ENCODE measurements at regions of chr19 and their contacts with region 1.

Region 1: DNA sequence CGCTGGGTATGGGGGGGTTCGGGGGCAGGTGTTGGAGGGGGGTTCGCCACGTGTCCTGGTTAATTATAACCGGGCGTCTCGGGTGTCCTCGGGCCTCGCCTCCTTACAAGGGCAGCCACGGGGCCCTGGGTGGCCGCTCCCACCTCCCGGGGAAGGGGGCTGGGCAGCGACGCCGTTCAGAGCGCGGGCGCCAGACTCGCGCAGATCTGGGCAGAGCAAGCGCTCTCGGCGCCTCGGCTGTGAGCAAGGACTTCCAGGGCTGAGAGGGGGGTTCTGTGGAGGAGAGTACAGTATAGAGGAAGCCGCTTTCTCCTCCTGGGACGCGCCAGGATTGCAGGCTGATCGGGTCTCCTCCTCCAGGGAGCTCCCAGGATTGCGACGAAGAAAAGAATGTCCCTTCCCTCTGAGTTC is 1.0 kb upstream of the CKM start:
- DNase-seq: no peak
- H3K4me3 ChIP-seq: no peak overlapping the region
- H3K27ac ChIP-seq: no peak overlapping the region
- H3K4me1 ChIP-seq: no peaks in the 10 kb centered on the region; the same call in 1 of the 2 replicates
- H3K27me3 ChIP-seq: no peaks in the 10 kb centered on the region
- CTCF ChIP-seq: no peak

Region 2: GRCh38 chr19:45137179-45137761 is 186.4 kb before region 1 on chr19:
- CTCF ChIA-PET with region 1: no interaction called
- POLR2A ChIA-PET with region 1: no interaction called
- intact Hi-C with region 1: no loop called
- DNase-seq: no peak
- H3K4me3 ChIP-seq: no peak overlapping the region
- H3K27ac ChIP-seq: no peak overlapping the region
- H3K4me1 ChIP-seq: no peaks in the 10 kb centered on the region
- H3K27me3 ChIP-seq: no peaks in the 10 kb centered on the region
- CTCF ChIP-seq: no peak

Region 3: GRCh38 chr19:45423589-45424190 is 100.0 kb after region 1 on chr19 and contains the start of gene ERCC1:
- CTCF ChIA-PET with region 1: interaction called, 11 read pairs
- POLR2A ChIA-PET with region 1: no interaction called
- intact Hi-C with region 1: no loop called
- DNase-seq: peak; percentile 97 to 99
- H3K4me3 ChIP-seq: peak within 1 kb of the TSS; percentile 77
- H3K27ac ChIP-seq: peak within 1 kb of the TSS; percentile 99
- H3K4me1 ChIP-seq: peaks cover 39% of the 10 kb centered on the region
- H3K27me3 ChIP-seq: no peaks in the 10 kb centered on the region
- CTCF ChIP-seq: no peak
- total RNA-seq, gene ERCC1: 102 and 138 TPM in 2 replicates

Region 4: GRCh38 chr19:45496349-45496953 is 172.8 kb after region 1 on chr19:
- CTCF ChIA-PET with region 1: no interaction called
- POLR2A ChIA-PET with region 1: no interaction called
- intact Hi-C with region 1: no loop called
- DNase-seq: peak in 1 of 2 experiments; percentile 45
- H3K4me3 ChIP-seq: peak overlapping the region; percentile 92
- H3K27ac ChIP-seq: no peak overlapping the region
- H3K4me1 ChIP-seq: peaks cover 14% of the 10 kb centered on the region; the same call in 1 of the 2 replicates
- H3K27me3 ChIP-seq: no peaks in the 10 kb centered on the region
- CTCF ChIP-seq: no peak

Region 5: DNA sequence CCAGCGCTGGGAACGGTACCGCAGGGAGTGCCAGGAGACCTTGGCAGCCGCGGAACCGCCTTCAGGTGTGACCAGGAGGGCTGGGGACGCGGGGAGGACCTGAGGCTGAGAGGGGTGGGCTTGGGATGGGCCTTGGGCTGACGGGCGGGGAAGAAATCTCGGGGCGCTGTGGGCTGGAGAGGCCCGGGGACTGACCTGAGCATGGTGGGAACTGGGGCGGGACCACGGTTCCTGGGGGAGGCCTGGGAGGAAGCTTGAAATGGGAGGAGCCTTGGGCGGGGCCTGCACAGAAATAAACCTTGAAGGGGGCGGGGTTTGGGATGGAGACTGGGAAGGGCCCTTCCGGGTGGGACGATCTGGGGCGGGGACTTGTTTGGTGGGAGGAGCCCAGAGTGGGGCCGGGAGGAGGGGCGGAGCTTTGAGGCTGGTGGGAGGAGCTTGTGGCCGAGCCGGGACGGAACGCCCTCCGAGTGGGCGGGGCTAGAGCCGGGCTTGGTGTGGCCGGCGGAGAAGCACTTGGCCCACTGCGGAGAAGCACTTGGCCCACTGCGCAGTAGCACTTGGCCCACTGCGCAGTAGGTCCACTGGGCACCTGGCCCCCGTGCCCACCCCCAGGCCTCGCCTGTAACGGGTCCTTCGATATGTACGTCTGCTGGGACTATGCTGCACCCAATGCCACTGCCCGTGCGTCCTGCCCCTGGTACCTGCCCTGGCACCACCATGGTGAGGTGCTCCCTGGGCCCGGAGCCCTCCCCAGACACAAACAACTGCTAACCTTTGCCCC is 347.2 kb after region 1 on chr19:
- CTCF ChIA-PET with region 1: no interaction called
- POLR2A ChIA-PET with region 1: interaction called, 10 read pairs
- intact Hi-C with region 1: no loop called
- DNase-seq: peak; percentile 81 to 96
- H3K4me3 ChIP-seq: peak overlapping the region; percentile 51; the same call in 1 of the 2 replicates
- H3K27ac ChIP-seq: no peak overlapping the region
- H3K4me1 ChIP-seq: peaks cover 35% of the 10 kb centered on the region
- H3K27me3 ChIP-seq: no peaks in the 10 kb centered on the region
- CTCF ChIP-seq: no peak

Region 6: DNA sequence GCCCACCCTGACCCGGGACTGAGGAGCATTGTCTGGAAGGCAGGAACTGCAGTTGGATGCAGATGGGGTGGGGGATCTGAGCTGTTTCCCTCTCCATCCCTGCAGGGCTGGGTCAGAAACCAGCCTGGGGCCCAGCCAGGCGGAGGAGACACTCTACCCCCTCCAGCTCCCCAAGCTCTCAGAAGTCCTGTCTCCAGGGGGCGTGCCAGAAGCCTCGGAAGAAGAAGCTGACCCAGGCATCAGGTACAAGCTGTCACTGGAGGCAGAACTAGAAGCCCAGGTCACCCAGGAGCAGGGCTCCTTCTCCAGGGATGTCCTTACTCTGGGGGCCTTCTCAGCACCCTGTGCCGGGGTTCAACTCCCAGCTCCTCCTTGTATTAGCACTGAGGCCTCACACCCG is 429.9 kb after region 1 on chr19:
- CTCF ChIA-PET with region 1: no interaction called
- POLR2A ChIA-PET with region 1: interaction called, 12 read pairs
- intact Hi-C with region 1: no loop called
- DNase-seq: no peak
- H3K4me3 ChIP-seq: no peak overlapping the region
- H3K27ac ChIP-seq: no peak overlapping the region
- H3K4me1 ChIP-seq: peaks cover 17% of the 10 kb centered on the region
- H3K27me3 ChIP-seq: no peaks in the 10 kb centered on the region
- CTCF ChIP-seq: no peak; the same call in 1 of the 2 replicates